HCT116 (cell line): ENCODE measurements at regions of chr10 and their contacts with region 1.

Region 1: DNA sequence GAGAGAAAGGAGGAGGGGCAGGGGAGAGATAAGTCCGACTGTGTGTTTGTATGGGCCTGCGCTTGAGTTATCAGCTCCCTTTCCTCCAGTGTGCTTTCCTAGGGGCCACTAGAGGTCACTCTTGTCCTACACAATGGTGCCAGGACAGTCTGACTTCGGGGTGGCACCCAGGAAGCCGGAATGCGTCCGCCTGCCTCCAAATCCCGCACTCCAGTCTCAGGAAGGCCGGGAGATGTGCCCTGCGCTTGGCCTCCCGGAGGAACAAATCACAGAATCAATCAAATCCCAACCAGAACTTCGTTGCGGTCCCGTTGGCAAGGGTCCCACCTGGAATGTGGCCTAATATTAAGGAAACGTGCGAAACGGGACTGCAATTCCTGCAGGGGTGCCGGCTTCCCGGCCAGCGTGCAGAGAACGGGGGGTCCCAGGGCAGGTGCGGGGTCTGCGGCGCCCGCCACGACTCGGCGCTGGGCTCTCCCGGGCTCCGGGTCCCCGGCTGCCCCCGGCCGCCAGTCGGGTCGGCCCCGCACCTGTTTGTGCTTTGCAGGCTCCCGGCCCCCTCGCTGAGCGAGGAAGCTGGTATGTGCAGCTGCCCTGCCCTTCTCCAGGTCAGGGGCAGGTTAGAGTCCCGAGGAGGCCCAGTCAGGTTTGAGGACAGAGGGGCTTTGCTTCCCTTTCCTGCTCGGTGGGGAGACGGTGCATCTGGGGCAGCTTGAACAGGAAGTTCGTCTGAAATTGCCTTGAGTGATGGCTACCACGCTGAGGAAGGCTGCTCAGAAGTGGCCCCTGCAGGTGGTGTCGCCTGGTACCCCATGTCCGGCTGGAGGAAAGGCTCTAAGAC is 21.0 kb upstream of the HPS1 start:
- DNase-seq: peak; percentile 89
- ATAC-seq: peak; percentile 100
- H3K4me3 ChIP-seq: peak overlapping the region in 1 of 2 experiments; percentile 2; a peak in 1 of 4 replicates
- H3K27ac ChIP-seq: no peak overlapping the region
- H3K4me1 ChIP-seq: peaks cover 0 to 12% of the 10 kb centered on the region in 2 experiments; a peak in 3 of 4 replicates
- H3K27me3 ChIP-seq: peaks cover 11% of the 10 kb centered on the region; the same call in 1 of the 2 replicates
- CTCF ChIP-seq: peak; percentile 84 to 94 (median 87)
- POLR2A ChIP-seq: no peak
- RAD21 ChIP-seq: peak; percentile 99

Region 2: DNA sequence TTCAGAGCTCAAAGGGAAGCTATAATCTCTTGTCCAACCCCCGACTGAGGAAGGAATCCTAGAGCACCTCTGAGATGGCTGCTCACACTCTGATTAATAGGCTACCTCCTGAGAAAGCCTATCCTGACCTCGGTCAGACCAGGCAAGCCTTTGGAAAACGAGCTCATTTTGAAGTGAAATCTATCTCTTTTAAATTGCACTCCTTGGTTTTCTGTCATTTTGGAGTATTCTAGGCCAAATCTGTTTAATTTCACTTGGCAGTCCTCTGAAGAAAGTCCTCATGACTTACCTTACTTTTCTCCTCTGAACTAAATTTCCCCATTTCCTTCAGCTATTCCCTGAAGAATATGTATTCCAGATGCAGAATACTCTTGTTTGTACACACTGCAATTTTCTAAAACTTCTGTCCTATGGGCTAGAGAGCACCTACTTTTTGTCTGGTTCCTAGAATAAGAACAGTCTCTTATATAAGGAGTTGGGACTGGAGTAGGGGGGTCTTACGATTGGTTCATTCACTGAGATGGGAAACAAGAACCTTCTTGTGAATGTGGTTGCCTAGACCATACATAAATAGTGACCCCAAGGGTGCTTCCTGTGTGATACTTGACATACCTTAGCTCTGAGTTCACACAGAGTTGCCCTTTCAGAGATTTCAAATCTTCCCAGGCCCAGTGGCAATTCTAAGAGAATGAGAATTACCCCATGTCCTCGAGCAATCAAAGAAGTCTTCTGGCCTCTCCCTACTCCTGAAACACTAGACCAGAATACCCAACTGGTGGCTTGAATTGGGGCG is 10.9 kb after region 1 on chr10:
- CTCF ChIA-PET with region 1: interaction called, 10 read pairs
- POLR2A ChIA-PET with region 1: no interaction called
- RAD21 ChIA-PET with region 1: no interaction called
- intact Hi-C with region 1: no loop called
- DNase-seq: no peak
- ATAC-seq: no peak
- H3K4me3 ChIP-seq: no peak overlapping the region
- H3K27ac ChIP-seq: no peak overlapping the region
- H3K4me1 ChIP-seq: no peaks in the 10 kb centered on the region
- H3K27me3 ChIP-seq: 0 out of 2 replicates have a peak, but pooled peaks cover 10% of the 10 kb centered on the region
- CTCF ChIP-seq: no peak
- POLR2A ChIP-seq: no peak
- RAD21 ChIP-seq: no peak

Region 3: DNA sequence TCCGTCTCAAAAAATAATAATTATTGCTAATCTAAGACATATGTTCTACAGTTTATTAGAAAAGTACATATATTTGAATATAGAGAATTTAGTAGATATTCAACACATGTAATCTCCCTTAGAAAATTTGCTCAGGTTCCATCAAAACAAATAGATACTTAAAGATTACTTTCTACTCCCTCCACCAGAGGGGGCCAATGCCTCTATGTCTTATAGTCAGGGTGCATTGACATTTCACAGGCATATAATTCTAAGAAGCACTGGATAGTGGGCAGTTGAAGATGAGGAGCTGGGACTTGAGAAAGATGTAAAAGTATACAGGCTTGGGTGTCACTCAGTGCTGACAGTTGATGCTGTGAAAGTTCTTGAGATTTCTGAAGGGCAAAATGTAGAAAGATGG is 280.6 kb after region 1 on chr10:
- CTCF ChIA-PET with region 1: interaction called, 3 read pairs
- POLR2A ChIA-PET with region 1: no interaction called
- RAD21 ChIA-PET with region 1: no interaction called
- intact Hi-C with region 1: loop called (anchors 5 kb)
- DNase-seq: peak; percentile 37
- ATAC-seq: peak; percentile 79
- H3K4me3 ChIP-seq: no peak overlapping the region
- H3K27ac ChIP-seq: no peak overlapping the region
- H3K4me1 ChIP-seq: no peaks in the 10 kb centered on the region
- H3K27me3 ChIP-seq: peaks cover 3% of the 10 kb centered on the region; the same call in 1 of the 2 replicates
- CTCF ChIP-seq: peak; percentile 59 to 65 (median 59); a peak in 5 of 6 replicates
- POLR2A ChIP-seq: no peak
- RAD21 ChIP-seq: peak; percentile 58

Region 4: DNA sequence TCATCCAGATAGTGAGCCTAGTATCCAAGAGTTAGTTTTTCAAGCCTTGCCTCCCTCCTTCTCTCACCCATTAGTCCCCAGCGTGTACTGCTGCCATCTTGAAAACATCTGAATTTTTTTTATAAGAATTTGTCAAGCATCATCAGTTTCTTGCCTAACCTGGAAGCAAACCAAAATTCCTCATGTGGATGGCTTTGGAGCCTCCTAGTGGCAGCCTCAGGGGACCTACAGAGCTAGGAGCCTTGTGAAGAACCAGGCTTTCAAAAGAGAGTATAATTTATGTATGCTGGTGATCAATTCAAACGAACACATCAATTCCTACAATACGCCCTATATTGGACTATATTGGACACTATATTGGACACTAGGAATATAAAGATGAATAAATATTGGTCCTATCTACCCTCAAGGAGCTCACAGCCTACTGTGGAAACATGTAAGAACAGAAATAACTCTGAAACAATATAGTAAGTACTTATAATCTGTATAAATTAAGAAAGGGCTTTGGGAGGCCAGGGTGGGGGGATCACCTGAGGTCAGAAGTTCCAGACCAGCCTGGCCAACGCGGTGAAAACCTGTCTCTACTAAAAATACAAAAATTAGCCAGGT is 704.5 kb after region 1 on chr10:
- CTCF ChIA-PET with region 1: interaction called, 4 read pairs
- POLR2A ChIA-PET with region 1: no interaction called
- RAD21 ChIA-PET with region 1: interaction called in 1 of 2 experiments, 3 read pairs
- intact Hi-C with region 1: loop called (anchors 1 kb)
- DNase-seq: peak; percentile 51
- ATAC-seq: peak; percentile 90
- H3K4me3 ChIP-seq: no peak overlapping the region
- H3K27ac ChIP-seq: no peak overlapping the region
- H3K4me1 ChIP-seq: no peaks in the 10 kb centered on the region
- H3K27me3 ChIP-seq: peaks cover 47% of the 10 kb centered on the region
- CTCF ChIP-seq: peak; percentile 55 to 89 (median 89); a peak in 5 of 6 replicates
- POLR2A ChIP-seq: no peak
- RAD21 ChIP-seq: peak; percentile 77

Region 5: DNA sequence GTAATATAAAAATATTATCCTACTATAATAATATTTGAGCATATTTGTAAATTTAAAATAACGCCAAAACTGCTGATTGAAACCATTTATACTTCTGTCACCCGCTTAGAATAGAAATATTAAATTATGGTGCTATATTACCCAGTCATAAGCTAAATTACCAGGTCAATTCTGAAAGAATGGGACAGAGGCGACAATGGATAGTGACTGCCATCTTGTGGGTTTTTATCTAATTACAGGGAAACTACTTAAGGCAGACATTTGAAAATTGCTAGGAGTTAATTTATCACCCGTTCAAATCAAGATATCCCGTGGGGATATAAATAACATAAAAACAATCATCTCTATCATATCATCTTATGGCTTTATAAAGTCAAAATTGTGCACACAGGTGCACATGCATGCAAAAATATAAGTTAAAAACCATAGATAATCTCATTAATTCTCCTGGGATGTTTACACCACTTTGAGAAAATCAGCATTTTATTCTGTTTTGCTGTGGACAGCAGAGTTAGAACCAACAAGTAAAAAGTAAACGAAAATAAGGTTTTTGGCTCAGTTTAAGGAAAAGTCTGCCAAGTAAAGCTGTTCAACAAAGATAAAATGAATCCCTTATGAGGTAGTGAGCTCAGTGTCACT is 809.2 kb after region 1 on chr10:
- CTCF ChIA-PET with region 1: interaction called, 29 read pairs
- POLR2A ChIA-PET with region 1: no interaction called
- RAD21 ChIA-PET with region 1: no interaction called
- intact Hi-C with region 1: loop called (anchors 1 kb)
- DNase-seq: peak; percentile 46
- ATAC-seq: peak; percentile 81
- H3K4me3 ChIP-seq: no peak overlapping the region
- H3K27ac ChIP-seq: no peak overlapping the region
- H3K4me1 ChIP-seq: no peaks in the 10 kb centered on the region
- H3K27me3 ChIP-seq: peaks cover 15% of the 10 kb centered on the region
- CTCF ChIP-seq: peak; percentile 60 to 86 (median 65); a peak in 5 of 6 replicates
- POLR2A ChIP-seq: no peak
- RAD21 ChIP-seq: peak; percentile 85

Region 6: DNA sequence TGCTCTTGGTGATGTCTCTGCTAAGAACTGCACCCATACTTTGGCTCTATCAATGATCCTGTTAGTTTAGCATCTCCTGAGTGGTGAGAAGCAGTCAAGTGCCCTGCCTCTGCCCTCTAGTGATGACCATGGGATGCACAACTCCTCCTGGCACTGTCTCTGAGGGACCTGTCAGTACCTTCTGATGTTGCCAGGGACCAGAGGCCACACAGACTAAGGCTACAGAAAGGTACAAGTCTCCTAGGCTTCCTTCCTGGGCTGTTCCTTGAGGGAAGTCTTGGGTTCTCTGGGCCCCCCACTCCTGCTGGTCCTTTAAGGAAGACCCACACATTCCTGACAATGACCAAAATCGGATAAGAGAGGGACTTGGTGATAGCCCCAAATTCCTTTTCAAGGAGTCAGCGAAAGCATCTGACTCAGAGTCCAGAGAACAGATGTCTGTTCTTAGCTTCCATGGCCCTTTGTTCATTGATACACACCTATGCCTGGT is 1080.4 kb after region 1 on chr10:
- CTCF ChIA-PET with region 1: no interaction called
- POLR2A ChIA-PET with region 1: no interaction called
- RAD21 ChIA-PET with region 1: no interaction called
- intact Hi-C with region 1: loop called (anchors 5 kb)
- DNase-seq: peak; percentile 50
- ATAC-seq: peak; percentile 98
- H3K4me3 ChIP-seq: no peak overlapping the region
- H3K27ac ChIP-seq: no peak overlapping the region
- H3K4me1 ChIP-seq: peaks cover 0 to 10% of the 10 kb centered on the region in 2 experiments; a peak in 1 of 4 replicates
- H3K27me3 ChIP-seq: peaks cover 26% of the 10 kb centered on the region; the same call in 1 of the 2 replicates
- CTCF ChIP-seq: peak; percentile 71 to 84 (median 81)
- POLR2A ChIP-seq: no peak
- RAD21 ChIP-seq: peak; percentile 71